ENCODE measurements at regions of chr21 and their contacts with region 1.

Region 1: DNA sequence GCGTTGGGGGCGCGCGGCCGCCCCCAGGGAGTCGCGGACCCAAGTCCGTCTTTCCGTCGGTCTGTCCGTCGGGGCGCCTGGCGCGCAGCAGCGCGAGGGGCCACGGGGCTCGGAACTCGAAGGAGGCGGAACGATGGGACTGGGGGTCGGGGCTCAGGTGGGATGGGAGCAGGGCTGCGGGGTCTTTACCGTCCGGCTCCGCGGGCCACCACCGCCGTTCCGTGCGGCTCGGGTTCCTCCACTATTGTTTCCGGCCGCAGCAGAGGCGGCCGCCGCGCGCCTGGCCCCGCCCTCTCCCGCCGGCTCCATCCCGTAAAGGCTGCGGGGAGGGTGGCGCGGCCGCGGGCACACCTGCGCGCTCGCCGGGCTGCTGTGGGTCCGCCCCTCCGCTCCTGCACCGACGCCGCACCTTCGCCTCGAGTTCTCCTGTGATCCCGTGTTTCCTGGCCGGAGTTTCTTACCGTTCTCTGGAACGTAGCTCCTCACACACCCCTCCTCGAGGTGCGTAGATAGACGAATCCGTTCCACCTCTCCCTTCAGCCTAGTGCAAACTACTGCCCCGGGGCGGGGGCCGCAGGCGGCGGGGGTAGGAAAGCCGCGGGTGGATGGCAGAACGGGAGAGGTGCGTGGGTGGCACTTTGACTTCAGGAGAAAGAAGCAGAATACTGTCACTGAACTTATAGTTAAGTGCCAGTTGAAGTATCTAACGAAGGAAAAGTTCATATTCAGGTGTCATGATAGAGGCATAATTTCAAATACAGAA is at the start of gene C21orf91:
- DNase-seq: peak; percentile 90
- ATAC-seq: peak; percentile 89
- H3K4me3 Mint-ChIP-seq: peak within 1 kb of the TSS; percentile 97
- H3K27ac Mint-ChIP-seq: peak within 1 kb of the TSS; percentile 100
- H3K4me1 Mint-ChIP-seq: peaks cover 31% of the 10 kb centered on the region
- H3K27me3 Mint-ChIP-seq: no peaks in the 10 kb centered on the region
- total RNA-seq, gene C21orf91: 67.9 to 75.2 TPM

Region 2: DNA sequence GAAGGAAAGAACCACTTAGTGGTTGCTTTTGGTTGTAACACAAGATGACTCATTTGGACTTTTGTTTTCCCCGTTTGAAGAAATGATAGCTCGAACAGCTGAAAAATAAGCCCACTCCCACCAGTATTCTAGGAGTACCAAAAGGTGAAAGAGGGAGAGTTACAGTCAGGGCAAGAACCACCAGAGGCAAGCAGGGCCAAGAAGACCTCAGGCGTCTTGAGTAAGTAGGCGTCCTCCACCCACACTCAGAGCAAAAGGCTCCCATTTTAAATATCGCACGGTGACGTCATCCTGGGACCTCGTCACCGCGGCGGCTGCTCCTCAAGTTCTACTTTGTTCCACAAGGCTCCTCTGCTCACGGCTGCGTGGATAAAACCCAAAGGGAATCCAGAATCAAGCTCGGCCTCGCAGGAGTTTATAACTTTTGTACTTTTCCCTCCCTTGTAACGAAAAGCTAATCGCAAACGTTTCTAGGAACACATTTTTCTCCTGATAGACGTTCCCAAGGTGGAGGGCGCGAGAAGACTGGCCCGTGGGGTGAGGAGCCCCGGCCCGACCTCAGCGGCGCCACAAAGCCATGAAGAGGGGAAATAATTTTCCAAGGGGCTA is 207.8 kb before region 1 on chr21:
- POLR2A ChIA-PET with region 1: interaction called, 14 read pairs
- DNase-seq: peak; percentile 74
- ATAC-seq: peak; percentile 57
- H3K4me3 Mint-ChIP-seq: peak overlapping the region; percentile 97
- H3K27ac Mint-ChIP-seq: peak overlapping the region; percentile 97
- H3K4me1 Mint-ChIP-seq: peaks cover 46% of the 10 kb centered on the region
- H3K27me3 Mint-ChIP-seq: peaks cover 2% of the 10 kb centered on the region

Region 3: DNA sequence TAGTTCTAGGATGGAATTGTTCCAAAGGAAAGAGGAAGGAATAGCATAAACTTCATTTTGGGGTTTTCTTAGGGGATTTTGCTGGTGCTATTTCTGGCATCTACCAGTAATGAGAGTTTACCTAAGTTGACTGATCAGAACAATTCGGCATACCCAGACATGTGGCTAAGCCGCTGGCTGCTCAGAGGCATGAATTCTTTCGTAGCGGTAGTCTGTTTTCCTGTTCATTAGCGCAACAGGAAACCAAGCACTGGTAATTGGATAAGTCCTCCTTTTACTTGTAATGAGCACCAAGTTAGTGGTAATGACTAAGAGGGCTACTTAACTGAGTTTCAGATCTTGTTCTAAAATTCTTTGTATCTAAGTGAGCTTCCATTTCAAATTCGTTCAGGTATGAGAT is 38.8 kb before region 1 on chr21:
- POLR2A ChIA-PET with region 1: interaction called, 36 read pairs
- DNase-seq: no peak
- ATAC-seq: peak; percentile 35
- H3K4me3 Mint-ChIP-seq: peak overlapping the region; percentile 59
- H3K27ac Mint-ChIP-seq: peak overlapping the region; percentile 88
- H3K4me1 Mint-ChIP-seq: peaks cover 73% of the 10 kb centered on the region
- H3K27me3 Mint-ChIP-seq: no peaks in the 10 kb centered on the region

Region 4: GRCh38 chr21:17793246-17794123 is 25.8 kb before region 1 on chr21:
- POLR2A ChIA-PET with region 1: interaction called, 28 read pairs
- DNase-seq: no peak
- ATAC-seq: peak; percentile 55
- H3K4me3 Mint-ChIP-seq: peak overlapping the region; percentile 79
- H3K27ac Mint-ChIP-seq: peak overlapping the region; percentile 85
- H3K4me1 Mint-ChIP-seq: peaks cover 58% of the 10 kb centered on the region
- H3K27me3 Mint-ChIP-seq: no peaks in the 10 kb centered on the region

Region 5: GRCh38 chr21:17798796-17799195 is 20.5 kb before region 1 on chr21:
- POLR2A ChIA-PET with region 1: interaction called, 28 read pairs
- DNase-seq: no peak
- ATAC-seq: no peak
- H3K4me3 Mint-ChIP-seq: no peak overlapping the region
- H3K27ac Mint-ChIP-seq: no peak overlapping the region
- H3K4me1 Mint-ChIP-seq: peaks cover 42% of the 10 kb centered on the region
- H3K27me3 Mint-ChIP-seq: no peaks in the 10 kb centered on the region

Region 6: DNA sequence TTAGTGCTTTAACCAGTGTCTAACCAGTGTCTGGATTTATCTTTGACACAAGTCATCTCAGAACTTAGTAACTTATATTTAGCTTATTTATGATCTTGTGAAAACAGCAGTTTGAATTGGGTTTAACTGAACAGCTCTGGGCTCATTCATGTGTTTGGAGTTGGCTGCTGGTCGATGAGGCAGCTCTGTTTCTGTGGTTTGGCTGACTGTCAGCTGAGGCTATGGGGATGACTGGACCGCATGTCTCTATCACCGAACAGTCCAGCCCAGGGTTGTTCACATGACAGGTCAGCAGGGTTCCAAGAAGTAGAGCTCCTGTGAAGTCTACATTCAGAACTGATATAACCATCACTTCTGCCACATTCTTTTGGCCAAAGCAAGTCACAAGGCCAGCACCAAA is 28.9 kb after region 1 on chr21:
- POLR2A ChIA-PET with region 1: no interaction called
- DNase-seq: no peak
- ATAC-seq: no peak
- H3K4me3 Mint-ChIP-seq: no peak overlapping the region
- H3K27ac Mint-ChIP-seq: no peak overlapping the region
- H3K4me1 Mint-ChIP-seq: no peaks in the 10 kb centered on the region
- H3K27me3 Mint-ChIP-seq: no peaks in the 10 kb centered on the region

Region 7: GRCh38 chr21:17979763-17980162 is 160.5 kb after region 1 on chr21:
- POLR2A ChIA-PET with region 1: no interaction called
- DNase-seq: no peak
- ATAC-seq: no peak
- H3K4me3 Mint-ChIP-seq: no peak overlapping the region
- H3K27ac Mint-ChIP-seq: no peak overlapping the region
- H3K4me1 Mint-ChIP-seq: no peaks in the 10 kb centered on the region
- H3K27me3 Mint-ChIP-seq: no peaks in the 10 kb centered on the region

Measured in activated naive CD8-positive, alpha-beta T cell treated with anti-CD3 and anti-CD28 coated beads, Interleukin-2, amount 10 ng/mL, durations not matched to agents 7 days and 5 days (primary cell).